ENCODE measurements at regions of chr22 and their contacts with region 1.

Region 1: DNA sequence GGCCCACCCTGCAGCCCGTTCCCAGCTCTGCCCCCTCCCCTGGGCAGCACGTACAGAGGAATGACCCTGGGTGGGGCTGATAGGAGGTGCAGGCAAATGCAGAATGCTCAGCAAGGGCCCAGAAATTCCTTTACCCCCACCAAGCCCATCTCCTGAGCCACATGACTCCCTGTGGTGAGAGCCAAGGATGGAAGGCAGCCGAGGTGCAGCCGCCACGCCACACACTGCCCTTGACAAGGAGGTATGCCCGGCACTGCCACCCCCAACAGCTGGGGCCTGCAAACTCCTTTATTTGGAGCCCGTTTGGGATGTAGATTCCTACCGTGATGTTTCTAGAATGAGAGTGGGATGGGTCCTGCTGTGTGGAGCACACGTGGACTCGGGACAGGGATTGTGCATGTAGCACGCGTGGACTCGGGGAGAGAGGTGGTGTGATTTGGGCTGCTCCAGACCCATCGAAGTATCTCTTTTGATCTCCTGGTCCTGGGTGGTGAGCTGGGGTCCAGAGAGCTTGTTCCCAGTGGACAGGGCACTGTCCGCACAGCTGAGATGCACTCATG is 12.9 kb downstream of the GTSE1 start:
- H3K4me3 Mint-ChIP-seq: no peak overlapping the region
- H3K27ac Mint-ChIP-seq: no peak overlapping the region
- H3K4me1 Mint-ChIP-seq: no peaks in the 10 kb centered on the region
- H3K27me3 Mint-ChIP-seq: no peaks in the 10 kb centered on the region

Region 2: GRCh38 chr22:46122511-46122971 is 187.1 kb before region 1 on chr22:
- intact Hi-C with region 1: loop called (anchors 1 kb)
- H3K4me3 Mint-ChIP-seq: no peak overlapping the region
- H3K27ac Mint-ChIP-seq: no peak overlapping the region
- H3K4me1 Mint-ChIP-seq: peaks cover 7% of the 10 kb centered on the region
- H3K27me3 Mint-ChIP-seq: peaks cover 15% of the 10 kb centered on the region

Region 3: DNA sequence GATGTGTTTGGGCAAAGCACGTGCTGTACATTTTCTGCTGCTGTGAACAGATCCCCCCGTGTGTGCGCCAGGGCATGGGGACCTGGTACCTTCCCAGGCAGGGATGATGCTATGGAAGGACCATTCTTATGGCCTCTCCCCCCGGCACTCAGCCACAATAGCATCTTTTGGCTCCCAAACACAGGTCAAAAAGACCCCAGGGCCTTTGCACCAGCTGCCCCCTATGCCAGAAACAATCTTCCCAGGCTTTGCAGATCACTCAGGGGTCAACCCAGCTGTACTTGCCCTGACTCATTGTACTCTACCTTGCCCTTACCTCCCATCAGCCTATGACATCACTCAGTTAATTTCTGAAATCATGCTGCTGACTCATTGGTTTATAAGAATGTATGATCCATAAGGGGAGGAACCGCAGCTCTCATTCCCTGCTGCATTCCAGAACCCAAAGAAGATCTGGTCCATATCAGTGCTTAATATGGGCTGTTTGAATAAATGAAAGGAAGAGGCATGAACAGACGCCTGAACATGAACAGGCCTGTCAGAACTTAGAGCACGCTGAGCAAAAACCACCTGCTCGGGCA is 127.1 kb after region 1 on chr22:
- intact Hi-C with region 1: no loop called
- H3K4me3 Mint-ChIP-seq: no peak overlapping the region
- H3K27ac Mint-ChIP-seq: no peak overlapping the region
- H3K4me1 Mint-ChIP-seq: peaks cover 19% of the 10 kb centered on the region
- H3K27me3 Mint-ChIP-seq: peaks cover 2% of the 10 kb centered on the region